Naive thymus-derived CD4-positive, alpha-beta T cell (primary cell): ENCODE measurements at regions of chr1 and their contacts with region 1.

Region 1: DNA sequence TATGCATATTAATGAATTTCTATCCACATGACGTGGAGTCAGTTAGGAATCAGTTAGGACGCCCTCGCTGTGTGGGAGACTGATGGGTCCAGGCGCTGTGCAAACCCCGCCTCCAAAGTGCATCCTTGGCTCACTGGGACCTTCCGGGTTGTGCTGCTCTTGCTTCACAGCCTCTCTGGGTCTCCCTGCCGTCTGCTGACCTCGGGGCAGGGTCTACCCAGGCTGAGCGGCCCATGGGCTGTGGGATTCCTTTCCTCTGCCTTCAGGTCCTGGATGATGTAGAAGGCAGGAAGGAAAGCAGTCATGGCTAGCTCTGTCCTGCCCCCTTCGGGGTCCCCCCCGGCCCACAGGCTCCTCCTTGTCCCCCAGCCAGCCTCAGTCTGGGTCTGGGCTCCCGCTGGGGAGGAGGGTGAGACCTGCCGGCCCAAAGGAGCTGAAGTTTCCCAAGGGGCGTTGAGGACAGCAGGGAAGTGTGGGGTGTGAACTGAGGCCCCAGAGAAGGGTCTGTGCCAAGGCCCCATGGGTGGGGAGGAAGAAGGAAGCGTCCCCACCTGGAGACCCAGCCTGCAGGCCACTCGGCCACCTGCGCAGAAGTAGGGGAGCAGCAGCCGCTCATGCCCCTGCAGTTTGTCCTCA is 24.6 kb upstream of the CDK11A start:
- DNase-seq: no peak
- ATAC-seq: no peak
- H3K4me3 ChIP-seq: no peak overlapping the region
- H3K4me3 Mint-ChIP-seq: peak overlapping the region in 4 of 10 donors; percentile 37 to 68 (median 56)
- H3K27ac ChIP-seq: no peak overlapping the region
- H3K27ac Mint-ChIP-seq: peak overlapping the region in 4 of 9 donors; percentile 38 to 60 (median 48)
- H3K4me1 ChIP-seq: no peaks in the 10 kb centered on the region
- H3K4me1 Mint-ChIP-seq: peaks cover 0 to 10% (median 5%) of the 10 kb centered on the region in 7 donors
- H3K27me3 ChIP-seq: no peaks in the 10 kb centered on the region
- H3K27me3 Mint-ChIP-seq: no peaks in the 10 kb centered on the region

Region 2: GRCh38 chr1:1324521-1325287 is 424.1 kb before region 1 on chr1 and contains the starts of genes CPTP and INTS11:
- CTCF ChIA-PET with region 1: no interaction called
- POLR2A ChIA-PET with region 1: no interaction called
- intact Hi-C with region 1: no loop called
- DNase-seq: peak; percentile 93 to 97 (median 95)
- ATAC-seq: peak; percentile 93
- H3K4me3 ChIP-seq: peak within 1 kb of the TSS; percentile 77
- H3K4me3 Mint-ChIP-seq: peak within 1 kb of the TSS; percentile 83 to 96 (median 90)
- H3K27ac ChIP-seq: peak within 1 kb of the TSS; percentile 92
- H3K27ac Mint-ChIP-seq: peak within 1 kb of the TSS; percentile 67 to 94 (median 91)
- H3K4me1 ChIP-seq: peaks cover 18 to 34% of the 10 kb centered on the region in 2 donors
- H3K4me1 Mint-ChIP-seq: peaks cover 12 to 53% (median 31%) of the 10 kb centered on the region in 7 donors
- H3K27me3 ChIP-seq: no peaks in the 10 kb centered on the region
- H3K27me3 Mint-ChIP-seq: no peaks in the 10 kb centered on the region
- total RNA-seq, gene CPTP: 11.5 to 29.3 (median 19.1) TPM
- total RNA-seq, gene INTS11: 126 to 187 (median 161) TPM

Region 3: DNA sequence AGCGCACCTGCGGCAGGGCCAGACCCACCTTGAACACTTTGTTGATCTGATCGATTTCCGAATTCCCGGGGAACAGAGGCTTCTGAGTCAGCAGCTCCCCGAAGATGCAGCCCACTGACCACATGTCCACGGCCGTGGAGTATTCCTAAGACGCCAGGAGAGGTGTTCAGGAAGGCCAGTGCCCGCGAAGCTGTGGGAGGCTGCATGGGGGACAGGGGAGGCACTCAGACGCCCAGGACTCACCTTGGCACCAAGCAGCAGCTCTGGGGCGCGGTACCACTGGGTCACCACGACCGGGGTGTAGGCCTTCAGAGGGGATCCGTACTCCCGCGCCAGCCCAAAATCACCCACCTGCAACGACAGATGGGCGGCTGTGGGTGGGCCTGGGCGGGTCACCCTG is 45.0 kb before region 1 on chr1:
- CTCF ChIA-PET with region 1: no interaction called
- POLR2A ChIA-PET with region 1: no interaction called
- intact Hi-C with region 1: loop called in 1 of 2 experiments (anchors 10 kb)
- DNase-seq: no peak
- ATAC-seq: no peak
- H3K4me3 ChIP-seq: no peak overlapping the region
- H3K4me3 Mint-ChIP-seq: no peak overlapping the region
- H3K27ac ChIP-seq: no peak overlapping the region
- H3K27ac Mint-ChIP-seq: no peak overlapping the region
- H3K4me1 ChIP-seq: no peaks in the 10 kb centered on the region
- H3K4me1 Mint-ChIP-seq: no peaks in the 10 kb centered on the region
- H3K27me3 ChIP-seq: no peaks in the 10 kb centered on the region
- H3K27me3 Mint-ChIP-seq: no peaks in the 10 kb centered on the region